Activated T-helper 1 cell treated with anti-CD3 and anti-CD28 coated beads, Interleukin-12 subunit alpha, Interleukin-12 subunit beta, Interleukin-2, Interleukin-4 antibody, amounts not matched to agents 30 ng/mL and 10 ng/mL and 1 ng/mL, durations not matched to agents 14 hours and 24 hours and 36 hours (primary cell): ENCODE measurements at regions of chr5 and their contacts with region 1.

Region 1: GRCh38 chr5:132419502-132420468 is 50.3 kb downstream of the SLC22A5 start:
- DNase-seq: peak; percentile 51
- H3K4me3 Mint-ChIP-seq: peak overlapping the region; percentile 80
- H3K27ac Mint-ChIP-seq: peak overlapping the region; percentile 95
- H3K4me1 Mint-ChIP-seq: peaks cover 95% of the 10 kb centered on the region
- H3K27me3 Mint-ChIP-seq: no peaks in the 10 kb centered on the region

Region 2: DNA sequence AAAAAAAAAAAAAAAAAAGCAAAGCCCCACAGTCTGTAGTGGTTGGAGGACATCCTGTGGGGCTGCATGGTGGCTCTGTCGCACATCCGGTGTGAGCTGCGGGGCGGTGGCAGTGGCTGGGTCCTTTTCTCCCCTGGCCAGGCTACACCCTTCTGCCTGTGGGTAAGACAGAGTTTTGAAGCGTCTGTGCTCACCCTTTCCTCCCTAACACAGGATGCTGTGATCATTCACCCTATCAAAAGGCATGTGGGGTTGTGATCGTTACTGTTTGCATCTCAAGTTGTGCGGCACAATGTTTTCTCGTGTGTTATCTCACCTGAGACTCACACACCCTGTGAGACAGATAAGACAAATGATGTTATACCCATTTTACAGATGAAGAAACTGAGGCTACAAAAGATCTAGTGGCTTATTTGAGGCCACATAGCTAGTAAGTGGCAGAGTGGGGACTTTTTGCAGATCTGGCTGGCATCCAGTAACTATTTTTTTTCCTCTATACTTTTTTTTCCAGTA is 53.3 kb after region 1 on chr5:
- intact Hi-C with region 1: loop called (anchors 1 kb)
- DNase-seq: peak; percentile 82
- H3K4me3 Mint-ChIP-seq: peak overlapping the region; percentile 29
- H3K27ac Mint-ChIP-seq: peak overlapping the region; percentile 88
- H3K4me1 Mint-ChIP-seq: peaks cover 83% of the 10 kb centered on the region
- H3K27me3 Mint-ChIP-seq: no peaks in the 10 kb centered on the region

Region 3: GRCh38 chr5:132500931-132501630 is 81.3 kb after region 1 on chr5:
- intact Hi-C with region 1: loop called (anchors 1 kb)
- DNase-seq: peak; percentile 66
- H3K4me3 Mint-ChIP-seq: no peak overlapping the region
- H3K27ac Mint-ChIP-seq: peak overlapping the region; percentile 72
- H3K4me1 Mint-ChIP-seq: peaks cover 54% of the 10 kb centered on the region
- H3K27me3 Mint-ChIP-seq: peaks cover 6% of the 10 kb centered on the region